ENCODE measurements at regions of chr21 and their contacts with region 1.

Region 1: DNA sequence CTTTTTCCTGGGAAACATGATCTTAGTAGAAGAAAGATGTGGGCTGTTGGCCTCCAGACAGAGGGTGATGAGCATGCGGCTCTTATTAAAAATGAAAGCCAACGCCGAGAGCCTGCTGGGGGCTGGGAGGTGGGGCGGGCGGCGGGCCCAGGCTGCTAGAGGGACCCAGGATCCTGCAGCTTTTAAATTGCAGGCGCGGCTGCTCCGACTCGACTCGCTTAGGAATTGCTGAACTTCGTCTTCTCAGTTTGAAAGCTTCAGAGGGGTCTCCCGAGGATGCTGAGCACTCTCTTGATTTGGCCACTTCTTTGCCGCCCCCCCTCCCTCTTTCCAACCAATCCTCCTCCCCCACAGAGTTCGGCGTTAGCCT is 1.2 kb downstream of the AGPAT3 start:
- DNase-seq: peak; percentile 55 to 58
- ATAC-seq: peak in 7 of 8 donors; percentile 39 to 80 (median 65)
- H3K4me3 ChIP-seq: peak overlapping the region; percentile 58 to 94 (median 85)
- H3K27ac ChIP-seq: peak overlapping the region; percentile 76 to 97 (median 94)
- H3K4me1 ChIP-seq: peaks cover 9 to 62% (median 42%) of the 10 kb centered on the region in 9 donors
- H3K27me3 ChIP-seq: no peaks in the 10 kb centered on the region
- CTCF ChIP-seq: no peak

Region 2: GRCh38 chr21:43810505-43811261 is 55.6 kb before region 1 on chr21:
- intact Hi-C with region 1: loop called in 2 of 10 experiments (anchors 5 to 10 kb)
- DNase-seq: peak; percentile 88 to 89
- ATAC-seq: peak; percentile 81 to 91 (median 86)
- H3K4me3 ChIP-seq: peak overlapping the region in 5 of 10 donors; percentile 6 to 47 (median 23)
- H3K27ac ChIP-seq: peak overlapping the region in 1 of 10 donors; percentile 48
- H3K4me1 ChIP-seq: peaks cover 3 to 30% (median 12%) of the 10 kb centered on the region in 9 donors
- H3K27me3 ChIP-seq: no peaks in the 10 kb centered on the region
- CTCF ChIP-seq: peak; percentile 88 to 97 (median 95)

Region 3: DNA sequence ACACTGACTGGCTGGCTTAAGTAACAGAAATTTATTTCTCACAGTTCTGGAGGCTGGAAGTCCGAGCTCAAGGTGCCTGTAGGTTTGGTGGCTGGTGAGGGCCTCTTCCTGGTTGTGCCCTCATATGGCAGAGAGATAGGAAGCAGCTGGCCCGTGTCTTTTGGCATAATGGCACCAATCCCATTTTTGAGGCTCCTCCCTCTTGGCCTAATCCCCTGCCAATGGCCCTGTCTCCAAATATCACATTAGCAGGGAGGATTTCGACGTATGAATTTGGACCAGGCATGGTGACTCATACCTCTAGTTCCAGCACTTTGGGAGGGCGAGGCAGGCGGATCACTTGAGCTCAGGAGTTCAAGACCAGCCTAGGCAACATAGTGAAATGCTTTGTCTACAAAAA is 36.2 kb after region 1 on chr21:
- intact Hi-C with region 1: loop called in 3 of 10 experiments (anchors 5 kb)
- DNase-seq: peak in 1 of 2 donors; percentile 34
- ATAC-seq: peak; percentile 37 to 67 (median 56)
- H3K4me3 ChIP-seq: no peak overlapping the region
- H3K27ac ChIP-seq: peak overlapping the region in 9 of 10 donors; percentile 65 to 82 (median 72)
- H3K4me1 ChIP-seq: peaks cover 0 to 26% (median 13%) of the 10 kb centered on the region in 9 donors
- H3K27me3 ChIP-seq: no peaks in the 10 kb centered on the region
- CTCF ChIP-seq: no peak

Region 4: GRCh38 chr21:43916691-43917514 is 50.7 kb after region 1 on chr21:
- intact Hi-C with region 1: loop called in 2 of 10 experiments (anchors 2 to 10 kb)
- DNase-seq: no peak
- ATAC-seq: peak; percentile 28 to 65 (median 45)
- H3K4me3 ChIP-seq: peak overlapping the region in 8 of 10 donors; percentile 1 to 47 (median 34)
- H3K27ac ChIP-seq: peak overlapping the region in 1 of 10 donors; percentile 64
- H3K4me1 ChIP-seq: peaks cover 6 to 66% (median 34%) of the 10 kb centered on the region in 9 donors
- H3K27me3 ChIP-seq: no peaks in the 10 kb centered on the region
- CTCF ChIP-seq: no peak

Region 5: GRCh38 chr21:43938751-43939442 is 72.7 kb after region 1 on chr21:
- intact Hi-C with region 1: loop called in 6 of 10 experiments (anchors 5 to 10 kb)
- DNase-seq: peak; percentile 78 to 83
- ATAC-seq: peak; percentile 81 to 95 (median 89)
- H3K4me3 ChIP-seq: peak overlapping the region in 8 of 10 donors; percentile 13 to 54 (median 48)
- H3K27ac ChIP-seq: peak overlapping the region in 8 of 10 donors; percentile 3 to 61 (median 50)
- H3K4me1 ChIP-seq: peaks cover 5 to 45% (median 27%) of the 10 kb centered on the region in 9 donors
- H3K27me3 ChIP-seq: no peaks in the 10 kb centered on the region
- CTCF ChIP-seq: peak; percentile 90 to 100 (median 96)